Mammary epithelial cell (primary cell): ENCODE measurements at regions of chr19 and their contacts with region 1.

Region 1: GRCh38 chr19:19459707-19460251 is 54.3 kb downstream of the GATAD2A start:
- DNase-seq: no peak
- H3K4me3 ChIP-seq: no peak overlapping the region
- H3K27ac ChIP-seq: no peak overlapping the region
- H3K4me1 ChIP-seq: peaks cover 54% of the 10 kb centered on the region
- H3K27me3 ChIP-seq: no peaks in the 10 kb centered on the region
- CTCF ChIP-seq: no peak

Region 2: DNA sequence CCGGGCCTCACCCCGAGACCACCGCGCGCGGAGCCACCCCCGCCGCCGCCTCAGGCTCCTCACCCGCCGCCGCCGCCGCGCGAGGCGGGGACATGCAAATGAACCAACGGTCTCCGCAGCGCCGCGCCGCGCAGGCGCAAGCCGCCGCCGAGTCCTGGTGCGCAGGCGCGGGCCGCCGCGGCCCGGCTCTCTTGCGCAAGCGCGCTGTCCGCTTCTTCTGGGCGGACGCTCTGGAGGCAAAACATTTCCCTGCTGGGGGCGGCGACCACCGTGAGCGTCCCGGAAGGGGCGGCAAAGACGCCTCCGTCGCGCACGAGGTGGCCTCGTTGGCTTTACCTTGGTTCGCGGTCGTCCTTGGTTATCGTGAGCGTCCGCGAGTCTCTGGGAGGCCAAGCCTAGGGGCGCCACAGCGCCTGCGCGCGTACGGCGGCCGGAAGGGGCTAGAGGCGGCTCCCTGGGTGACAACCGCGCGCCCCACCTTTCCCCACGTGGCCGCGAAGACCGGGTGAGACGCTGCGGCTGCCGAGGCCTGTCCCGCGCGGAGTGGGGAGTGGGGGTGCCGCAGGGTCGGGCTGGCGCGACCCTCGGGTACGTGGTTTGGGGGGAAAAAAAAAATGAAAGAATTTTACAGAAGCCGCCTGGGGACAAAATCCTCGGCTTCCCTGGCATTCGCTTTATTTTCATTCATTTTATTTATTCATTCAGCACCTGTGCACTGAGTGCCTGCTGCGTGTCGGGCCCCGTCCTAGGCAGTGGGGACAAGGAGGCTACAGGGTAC is 426.2 kb before region 1 on chr19 and contains the starts of genes ARMC6 and SUGP2:
- CTCF ChIA-PET with region 1: no interaction called
- dilution Hi-C with region 1: loop called (anchors 10 kb)
- in situ Hi-C with region 1: no loop called
- intact Hi-C with region 1: no loop called
- DNase-seq: peak; percentile 84
- H3K4me3 ChIP-seq: peak within 1 kb of the TSS; percentile 78 to 93 (median 83)
- H3K27ac ChIP-seq: peak within 1 kb of the TSS; percentile 62
- H3K4me1 ChIP-seq: no peaks in the 10 kb centered on the region
- H3K27me3 ChIP-seq: no peaks in the 10 kb centered on the region
- CTCF ChIP-seq: no peak
- total RNA-seq, gene ARMC6: 35.1 to 37.7 TPM
- total RNA-seq, gene SUGP2: 34.0 to 59.5 TPM

Region 3: DNA sequence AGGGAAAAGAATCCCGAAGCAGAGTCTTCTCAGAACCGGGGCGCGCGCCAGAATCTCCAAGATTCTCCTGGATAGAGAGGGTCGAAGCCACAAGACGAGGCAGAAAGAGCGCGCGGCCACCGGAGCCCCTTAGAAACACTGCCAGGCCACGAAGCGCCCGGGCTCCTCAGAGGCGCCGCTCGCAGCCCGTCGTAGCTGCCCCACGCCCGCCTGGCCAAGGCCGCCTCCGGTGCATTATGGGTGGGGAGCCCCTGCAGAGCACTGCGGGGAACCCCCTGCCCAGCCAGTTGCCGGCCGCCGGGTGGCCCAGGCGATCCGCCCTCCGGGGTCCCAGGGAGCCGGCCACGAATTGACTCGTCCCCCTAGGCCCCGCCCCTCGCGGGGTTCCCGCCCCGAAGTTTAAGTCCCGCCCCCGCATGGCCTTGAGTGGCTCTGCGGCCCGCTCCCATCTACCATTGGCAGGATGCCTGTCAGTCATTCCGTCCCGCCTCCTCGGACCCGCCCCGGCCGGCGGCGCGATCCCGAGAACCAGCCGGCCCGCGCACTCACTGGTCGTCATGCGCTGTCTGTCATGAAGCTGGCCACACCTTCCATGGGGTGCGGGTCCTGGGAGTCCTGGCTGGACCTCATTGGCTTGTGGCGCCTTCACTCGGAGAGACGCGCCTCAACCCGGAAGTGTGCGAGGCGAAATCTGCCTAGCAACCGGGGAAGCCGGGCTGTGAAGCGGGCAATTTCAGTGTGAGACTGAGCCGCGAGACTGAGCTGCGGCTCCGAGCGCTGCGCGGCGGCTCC is 74.5 kb before region 1 on chr19:
- CTCF ChIA-PET with region 1: no interaction called
- dilution Hi-C with region 1: loop called (anchors 5 kb)
- in situ Hi-C with region 1: no loop called
- intact Hi-C with region 1: no loop called
- DNase-seq: peak; percentile 100
- H3K4me3 ChIP-seq: peak overlapping the region; percentile 84 to 85 (median 84)
- H3K27ac ChIP-seq: peak overlapping the region; percentile 31
- H3K4me1 ChIP-seq: peaks cover 27% of the 10 kb centered on the region
- H3K27me3 ChIP-seq: no peaks in the 10 kb centered on the region
- CTCF ChIP-seq: no peak

Region 4: DNA sequence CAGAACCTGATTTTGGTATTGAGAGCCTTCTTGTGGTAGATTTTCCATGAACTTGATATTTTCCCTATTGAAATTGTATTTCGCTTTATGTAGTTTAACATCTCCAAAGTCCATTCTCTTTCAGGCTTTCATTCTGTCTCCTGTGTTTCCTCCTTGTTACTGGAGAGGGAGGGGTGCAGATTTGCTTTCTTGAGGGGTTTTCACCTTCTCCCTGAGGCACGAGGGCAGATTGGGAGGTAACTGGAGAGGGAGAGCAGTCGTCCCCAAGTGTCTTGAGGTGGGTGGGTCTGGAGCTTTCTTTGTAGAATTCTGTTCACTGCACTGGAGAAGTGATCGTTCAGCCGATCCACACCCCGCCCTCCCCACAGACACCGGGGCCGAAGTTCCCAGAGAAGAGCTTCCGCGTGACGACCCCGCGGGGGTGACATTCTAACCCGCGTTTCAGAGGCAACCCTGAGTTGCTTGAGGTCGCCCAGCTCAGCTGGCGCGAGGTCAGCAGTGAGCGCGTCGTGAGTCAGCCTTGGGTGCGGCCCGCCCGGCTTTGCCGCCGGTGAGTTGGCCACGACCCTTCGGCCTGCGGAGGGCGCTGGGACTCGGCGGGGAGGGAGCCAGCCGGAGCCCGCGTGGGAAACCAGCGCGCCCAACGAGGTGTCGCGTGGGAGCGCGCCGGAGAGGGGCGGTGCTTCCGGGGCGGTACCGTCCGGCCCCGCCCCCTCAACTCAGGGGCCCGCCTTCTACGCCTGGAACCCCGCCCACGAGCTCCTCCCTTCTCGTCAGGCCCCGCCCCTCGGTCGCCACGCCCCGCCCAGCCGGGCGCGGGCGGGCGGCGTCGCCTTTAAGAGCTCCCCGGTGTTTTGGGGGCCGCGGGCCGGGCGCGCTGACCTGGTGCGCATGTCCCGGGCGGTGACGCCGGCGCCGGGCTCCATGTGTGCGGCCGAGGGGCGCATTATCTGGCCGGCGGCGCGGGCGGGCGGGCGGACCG is 54.6 kb before region 1 on chr19 and contains the start of gene GATAD2A:
- CTCF ChIA-PET with region 1: no interaction called
- dilution Hi-C with region 1: no loop called
- in situ Hi-C with region 1: no loop called
- intact Hi-C with region 1: loop called (anchors 5 kb)
- DNase-seq: peak; percentile 92
- H3K4me3 ChIP-seq: peak within 1 kb of the TSS; percentile 60 to 80 (median 67)
- H3K27ac ChIP-seq: peak within 1 kb of the TSS; percentile 48
- H3K4me1 ChIP-seq: peaks cover 47% of the 10 kb centered on the region
- H3K27me3 ChIP-seq: no peaks in the 10 kb centered on the region
- CTCF ChIP-seq: peak in 1 of 2 donors; percentile 48
- total RNA-seq, gene GATAD2A: 67.5 to 109 TPM

Region 5: GRCh38 chr19:19420570-19421298 is 39.0 kb before region 1 on chr19:
- CTCF ChIA-PET with region 1: no interaction called
- dilution Hi-C with region 1: loop called (anchors 5 kb)
- in situ Hi-C with region 1: no loop called
- intact Hi-C with region 1: no loop called
- DNase-seq: no peak
- H3K4me3 ChIP-seq: no peak overlapping the region
- H3K27ac ChIP-seq: no peak overlapping the region
- H3K4me1 ChIP-seq: no peaks in the 10 kb centered on the region
- H3K27me3 ChIP-seq: no peaks in the 10 kb centered on the region
- CTCF ChIP-seq: no peak

Region 6: GRCh38 chr19:19514215-19514633 is 54.4 kb after region 1 on chr19:
- CTCF ChIA-PET with region 1: no interaction called
- dilution Hi-C with region 1: loop called (anchors 5 kb)
- in situ Hi-C with region 1: no loop called
- intact Hi-C with region 1: no loop called
- DNase-seq: no peak
- H3K4me3 ChIP-seq: no peak overlapping the region
- H3K27ac ChIP-seq: no peak overlapping the region
- H3K4me1 ChIP-seq: peaks cover 13% of the 10 kb centered on the region
- H3K27me3 ChIP-seq: no peaks in the 10 kb centered on the region
- CTCF ChIP-seq: no peak